SK-N-SH (cell line): ENCODE measurements at regions of chr11 and their contacts with region 1.

Region 1: GRCh38 chr11:4181782-4182721 is 87.5 kb downstream of the RRM1 start:
- DNase-seq: peak; percentile 73
- H3K4me3 ChIP-seq: no peak overlapping the region
- H3K27ac ChIP-seq: no peak overlapping the region
- H3K4me1 ChIP-seq: peaks cover 0 to under 1% of the 10 kb centered on the region in 2 experiments; a peak in 1 of 4 replicates
- H3K27me3 ChIP-seq: no peaks in the 10 kb centered on the region
- CTCF ChIP-seq: peak; percentile 66
- EP300 ChIP-seq: no peak
- RAD21 ChIP-seq: peak; percentile 66

Region 2: DNA sequence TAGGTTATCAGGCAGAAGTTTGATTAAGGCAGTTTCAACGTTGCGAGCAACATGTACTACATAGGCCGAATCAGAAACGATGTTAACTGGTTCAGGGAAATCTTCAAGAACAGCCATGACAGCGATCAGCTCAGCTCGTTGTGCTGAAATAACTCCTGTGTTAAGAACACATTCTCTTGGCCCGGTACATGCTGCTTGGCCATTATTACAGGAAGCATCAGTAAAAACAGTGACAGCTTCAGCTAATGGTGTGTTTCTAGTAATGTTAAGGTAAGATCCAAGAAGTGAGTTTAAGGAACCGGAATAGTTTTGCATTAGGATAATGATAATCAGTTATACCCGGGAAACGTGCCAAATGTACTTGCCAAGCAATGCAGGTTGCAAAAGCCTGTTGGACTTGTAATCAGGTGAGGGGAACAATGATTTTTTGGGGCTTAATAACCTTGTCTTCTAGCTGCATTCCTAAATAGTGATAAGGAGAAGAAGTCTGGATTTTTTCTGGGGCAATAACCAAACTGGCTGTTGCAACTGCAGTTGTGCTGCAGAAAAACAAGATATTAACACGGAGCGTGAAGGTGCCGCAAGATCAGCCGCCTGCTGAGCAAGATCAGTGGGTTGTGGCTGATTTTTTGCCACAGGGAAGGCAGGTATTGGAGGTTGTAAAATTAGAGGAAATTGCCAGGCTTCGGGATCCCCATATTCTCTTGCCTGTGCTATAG is 314.7 kb after region 1 on chr11:
- CTCF ChIA-PET with region 1: interaction called, 121 read pairs
- POLR2A ChIA-PET with region 1: no interaction called
- DNase-seq: no peak
- H3K4me3 ChIP-seq: no peak overlapping the region
- H3K27ac ChIP-seq: no peak overlapping the region
- H3K4me1 ChIP-seq: no peaks in the 10 kb centered on the region; a peak in 1 of 4 replicates
- H3K27me3 ChIP-seq: peaks cover 49% of the 10 kb centered on the region
- CTCF ChIP-seq: no peak
- EP300 ChIP-seq: no peak
- RAD21 ChIP-seq: no peak

Region 3: GRCh38 chr11:4539603-4540219 is 357.7 kb after region 1 on chr11:
- CTCF ChIA-PET with region 1: interaction called, 63 read pairs
- POLR2A ChIA-PET with region 1: no interaction called
- DNase-seq: peak; percentile 18
- H3K4me3 ChIP-seq: no peak overlapping the region; a peak in 1 of 4 replicates
- H3K27ac ChIP-seq: no peak overlapping the region
- H3K4me1 ChIP-seq: no peaks in the 10 kb centered on the region
- H3K27me3 ChIP-seq: no peaks in the 10 kb centered on the region; the same call in 1 of the 2 replicates
- CTCF ChIP-seq: peak; percentile 74
- EP300 ChIP-seq: no peak
- RAD21 ChIP-seq: peak; percentile 58